Activated CD4-positive, alpha-beta memory T cell treated with anti-CD3 and anti-CD28 coated beads for 36 hours (primary cell): ENCODE measurements at regions of chr16 and their contacts with region 1.

Region 1: GRCh38 chr16:1610276-1611017 is 1.4 kb downstream of the IFT140 start:
- DNase-seq: peak; percentile 93
- H3K4me3 Mint-ChIP-seq: peak overlapping the region; percentile 86
- H3K27ac Mint-ChIP-seq: no peak overlapping the region
- H3K4me1 Mint-ChIP-seq: peaks cover 34% of the 10 kb centered on the region
- H3K27me3 Mint-ChIP-seq: no peaks in the 10 kb centered on the region

Region 2: GRCh38 chr16:1420111-1420540 is 190.3 kb before region 1 on chr16:
- CTCF ChIA-PET with region 1: no interaction called
- POLR2A ChIA-PET with region 1: interaction called, 4 read pairs
- intact Hi-C with region 1: loop called (anchors 2 kb)
- DNase-seq: peak; percentile 28
- H3K4me3 Mint-ChIP-seq: peak overlapping the region; percentile 87
- H3K27ac Mint-ChIP-seq: peak overlapping the region; percentile 64
- H3K4me1 Mint-ChIP-seq: peaks cover 27% of the 10 kb centered on the region
- H3K27me3 Mint-ChIP-seq: no peaks in the 10 kb centered on the region

Region 3: GRCh38 chr16:1677802-1678496 is 67.5 kb after region 1 on chr16 and contains the start of gene JPT2:
- CTCF ChIA-PET with region 1: no interaction called
- POLR2A ChIA-PET with region 1: no interaction called
- intact Hi-C with region 1: loop called (anchors 2 kb)
- DNase-seq: peak; percentile 98
- H3K4me3 Mint-ChIP-seq: peak within 1 kb of the TSS; percentile 97
- H3K27ac Mint-ChIP-seq: peak within 1 kb of the TSS; percentile 79
- H3K4me1 Mint-ChIP-seq: peaks cover 29% of the 10 kb centered on the region
- H3K27me3 Mint-ChIP-seq: no peaks in the 10 kb centered on the region
- total RNA-seq, gene JPT2: 62.1 to 65.9 TPM

Region 4: GRCh38 chr16:1772736-1773584 is 162.5 kb after region 1 on chr16 and contains the starts of genes EME2 and MRPS34:
- CTCF ChIA-PET with region 1: no interaction called
- POLR2A ChIA-PET with region 1: no interaction called
- intact Hi-C with region 1: loop called (anchors 5 kb)
- DNase-seq: peak; percentile 87
- H3K4me3 Mint-ChIP-seq: peak within 1 kb of the TSS; percentile 94
- H3K27ac Mint-ChIP-seq: peak within 1 kb of the TSS; percentile 94
- H3K4me1 Mint-ChIP-seq: peaks cover 6% of the 10 kb centered on the region
- H3K27me3 Mint-ChIP-seq: no peaks in the 10 kb centered on the region
- total RNA-seq, gene EME2: 11.9 to 15.3 TPM
- total RNA-seq, gene MRPS34: 151 to 152 TPM